ENCODE measurements at regions of chr1 and their contacts with region 1.

Region 1: DNA sequence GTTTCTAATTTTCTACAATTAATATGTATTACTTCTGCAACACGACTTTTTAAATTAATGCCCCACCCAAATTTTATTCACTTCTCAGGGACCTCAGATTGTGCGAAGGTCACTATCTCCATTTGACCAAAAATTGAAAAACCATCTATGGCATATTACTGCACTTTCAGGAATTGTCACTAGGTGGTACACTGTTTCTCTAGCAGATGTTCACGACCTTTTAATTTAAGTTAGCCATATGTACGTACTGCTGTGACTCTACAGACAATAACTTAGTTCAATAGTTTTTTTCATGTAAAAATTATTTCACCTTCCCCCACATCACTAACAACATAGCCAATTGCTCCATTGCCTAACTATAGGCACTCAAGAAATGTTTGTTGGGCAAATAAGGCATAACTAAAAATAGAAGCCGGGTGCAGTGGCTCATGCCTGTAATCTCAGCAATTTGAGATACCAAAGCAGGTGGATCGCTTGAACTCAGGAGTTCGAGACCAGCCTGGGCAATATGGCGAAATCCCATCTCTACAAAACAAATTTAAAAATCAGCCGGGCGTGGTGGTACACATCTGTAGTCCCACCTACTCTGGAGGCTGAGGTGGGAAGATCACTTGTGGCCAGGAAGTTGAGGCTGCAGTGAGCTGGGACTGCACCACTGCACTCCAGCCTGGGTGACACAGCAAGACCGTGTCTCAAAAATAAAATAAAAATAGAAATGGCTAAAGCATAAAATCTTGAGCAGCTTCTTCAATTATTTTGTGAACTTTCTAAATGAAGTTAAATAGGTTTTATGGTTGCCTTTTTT is 75.7 kb upstream of the PKN2 start:
- DNase-seq: peak; percentile 39
- ATAC-seq: peak; percentile 82
- H3K4me3 ChIP-seq: no peak overlapping the region
- H3K27ac ChIP-seq: no peak overlapping the region
- H3K4me1 ChIP-seq: 0 out of 2 replicates have a peak, but pooled peaks cover 3% of the 10 kb centered on the region
- H3K27me3 ChIP-seq: peaks cover 3% of the 10 kb centered on the region; the same call in 1 of the 2 replicates
- CTCF ChIP-seq: peak; percentile 83

Region 2: GRCh38 chr1:88562991-88563390 is 45.4 kb before region 1 on chr1:
- CTCF ChIA-PET with region 1: interaction called, 15 read pairs
- POLR2A ChIA-PET with region 1: no interaction called
- in situ Hi-C with region 1: no loop called
- intact Hi-C with region 1: no loop called
- DNase-seq: no peak
- ATAC-seq: no peak
- H3K4me3 ChIP-seq: no peak overlapping the region
- H3K27ac ChIP-seq: no peak overlapping the region
- H3K4me1 ChIP-seq: no peaks in the 10 kb centered on the region
- H3K27me3 ChIP-seq: peaks cover 9% of the 10 kb centered on the region; the same call in 1 of the 2 replicates
- CTCF ChIP-seq: no peak

Region 3: GRCh38 chr1:88634538-88634937 is 26.2 kb after region 1 on chr1:
- CTCF ChIA-PET with region 1: no interaction called
- POLR2A ChIA-PET with region 1: no interaction called
- in situ Hi-C with region 1: no loop called
- intact Hi-C with region 1: no loop called
- DNase-seq: no peak
- ATAC-seq: no peak
- H3K4me3 ChIP-seq: no peak overlapping the region
- H3K27ac ChIP-seq: no peak overlapping the region
- H3K4me1 ChIP-seq: no peaks in the 10 kb centered on the region
- H3K27me3 ChIP-seq: no peaks in the 10 kb centered on the region
- CTCF ChIP-seq: no peak

Region 4: DNA sequence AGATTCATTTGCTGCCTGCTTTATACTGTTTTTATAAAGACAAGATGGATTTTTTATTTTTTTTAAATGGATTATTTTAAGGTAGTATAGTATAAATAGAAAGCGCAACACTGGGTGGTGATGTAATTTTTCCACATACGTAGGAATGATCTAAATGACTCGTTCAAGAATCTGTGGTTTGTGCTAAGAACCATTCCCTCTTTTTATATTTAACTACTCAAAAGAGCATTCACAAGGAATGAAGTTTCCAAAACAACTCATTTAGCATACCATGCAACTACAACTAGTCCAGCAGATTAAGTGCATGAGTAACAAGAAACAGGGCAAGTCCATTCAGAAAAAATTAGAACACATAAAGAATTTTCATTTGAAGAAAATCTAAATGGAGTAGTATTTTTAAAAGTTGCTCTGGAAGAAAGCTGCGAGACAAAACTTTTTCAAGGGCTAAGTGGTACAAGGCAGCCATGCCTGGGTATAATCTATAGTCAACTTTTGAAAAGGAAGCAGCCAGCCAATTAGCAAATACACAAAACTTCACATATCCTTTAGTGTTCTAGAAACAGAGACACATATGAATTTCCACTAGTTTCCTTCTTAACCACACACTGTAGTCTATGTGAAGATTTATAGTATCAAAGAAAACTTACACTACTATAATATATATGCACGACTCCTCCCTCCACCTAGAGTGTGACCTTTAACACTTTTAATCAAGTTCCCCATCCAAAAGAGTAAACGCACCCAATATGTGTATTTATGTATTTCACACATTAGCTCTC is 259.6 kb after region 1 on chr1:
- CTCF ChIA-PET with region 1: no interaction called
- POLR2A ChIA-PET with region 1: no interaction called
- in situ Hi-C with region 1: no loop called
- intact Hi-C with region 1: no loop called
- DNase-seq: no peak
- ATAC-seq: no peak
- H3K4me3 ChIP-seq: no peak overlapping the region
- H3K27ac ChIP-seq: no peak overlapping the region
- H3K4me1 ChIP-seq: no peaks in the 10 kb centered on the region
- H3K27me3 ChIP-seq: no peaks in the 10 kb centered on the region
- CTCF ChIP-seq: no peak

Measured in Panc1 (cell line).